ENCODE measurements at regions of chr4 and their contacts with region 1.

Region 1: GRCh38 chr4:8176547-8177399 is 18.2 kb upstream of the ABLIM2 start:
- DNase-seq: peak; percentile 59
- H3K4me3 Mint-ChIP-seq: no peak overlapping the region
- H3K27ac Mint-ChIP-seq: no peak overlapping the region
- H3K4me1 Mint-ChIP-seq: no peaks in the 10 kb centered on the region
- H3K27me3 Mint-ChIP-seq: peaks cover 5% of the 10 kb centered on the region
- CTCF ChIP-seq: peak; percentile 63

Region 2: GRCh38 chr4:8050180-8050554 is 126.6 kb before region 1 on chr4:
- CTCF ChIA-PET with region 1: no interaction called
- intact Hi-C with region 1: no loop called
- DNase-seq: no peak
- H3K4me3 Mint-ChIP-seq: no peak overlapping the region
- H3K27ac Mint-ChIP-seq: no peak overlapping the region
- H3K4me1 Mint-ChIP-seq: no peaks in the 10 kb centered on the region
- H3K27me3 Mint-ChIP-seq: peaks cover 15% of the 10 kb centered on the region
- CTCF ChIP-seq: no peak

Region 3: GRCh38 chr4:8192748-8193738 is 16.3 kb after region 1 on chr4:
- CTCF ChIA-PET with region 1: interaction called, 18 read pairs
- intact Hi-C with region 1: no loop called
- DNase-seq: peak; percentile 56
- H3K4me3 Mint-ChIP-seq: no peak overlapping the region
- H3K27ac Mint-ChIP-seq: peak overlapping the region; percentile 9
- H3K4me1 Mint-ChIP-seq: peaks cover 39% of the 10 kb centered on the region
- H3K27me3 Mint-ChIP-seq: no peaks in the 10 kb centered on the region
- CTCF ChIP-seq: no peak

Region 4: DNA sequence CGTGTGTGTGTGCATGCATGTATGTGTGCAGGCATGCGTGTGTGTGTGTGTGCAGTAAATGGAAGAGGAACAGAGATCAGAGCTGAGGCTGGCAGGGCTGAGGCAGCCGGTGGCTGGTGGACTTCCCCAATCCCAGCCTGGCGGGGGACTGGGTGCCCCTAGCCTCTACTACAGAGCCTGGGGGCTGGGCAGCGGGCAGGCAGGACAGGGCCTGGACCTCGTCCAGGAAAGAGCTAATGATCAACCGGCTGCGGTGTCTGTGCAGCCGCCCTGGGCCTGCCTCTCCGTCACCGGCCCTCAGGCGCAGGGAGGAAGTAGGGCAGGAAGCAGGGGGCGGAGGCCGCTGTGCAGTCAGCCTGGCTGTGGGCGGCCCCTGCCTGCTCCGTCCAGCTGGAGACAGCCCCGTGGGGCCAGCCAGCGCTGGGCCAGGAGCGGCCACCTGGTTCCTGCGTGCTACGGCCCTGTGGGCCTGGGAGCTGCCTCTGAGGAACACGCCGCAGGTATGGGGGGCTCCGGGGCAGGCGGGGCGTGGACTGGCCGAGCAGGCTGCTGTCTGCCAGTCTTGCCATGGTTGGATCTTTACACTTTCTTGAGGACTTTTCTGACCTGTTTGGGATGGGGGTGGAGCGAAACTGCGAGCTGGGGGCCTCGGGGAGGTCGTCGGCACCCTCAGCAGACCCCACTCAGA is 22.3 kb after region 1 on chr4 and contains the start of gene SH3TC1:
- CTCF ChIA-PET with region 1: interaction called, 18 read pairs
- intact Hi-C with region 1: no loop called
- DNase-seq: peak; percentile 92
- H3K4me3 Mint-ChIP-seq: peak within 1 kb of the TSS; percentile 79
- H3K27ac Mint-ChIP-seq: peak within 1 kb of the TSS; percentile 54
- H3K4me1 Mint-ChIP-seq: peaks cover 27% of the 10 kb centered on the region
- H3K27me3 Mint-ChIP-seq: no peaks in the 10 kb centered on the region
- CTCF ChIP-seq: no peak
- total RNA-seq, gene SH3TC1: 7.8 and 10.8 TPM in 2 replicates

Region 5: DNA sequence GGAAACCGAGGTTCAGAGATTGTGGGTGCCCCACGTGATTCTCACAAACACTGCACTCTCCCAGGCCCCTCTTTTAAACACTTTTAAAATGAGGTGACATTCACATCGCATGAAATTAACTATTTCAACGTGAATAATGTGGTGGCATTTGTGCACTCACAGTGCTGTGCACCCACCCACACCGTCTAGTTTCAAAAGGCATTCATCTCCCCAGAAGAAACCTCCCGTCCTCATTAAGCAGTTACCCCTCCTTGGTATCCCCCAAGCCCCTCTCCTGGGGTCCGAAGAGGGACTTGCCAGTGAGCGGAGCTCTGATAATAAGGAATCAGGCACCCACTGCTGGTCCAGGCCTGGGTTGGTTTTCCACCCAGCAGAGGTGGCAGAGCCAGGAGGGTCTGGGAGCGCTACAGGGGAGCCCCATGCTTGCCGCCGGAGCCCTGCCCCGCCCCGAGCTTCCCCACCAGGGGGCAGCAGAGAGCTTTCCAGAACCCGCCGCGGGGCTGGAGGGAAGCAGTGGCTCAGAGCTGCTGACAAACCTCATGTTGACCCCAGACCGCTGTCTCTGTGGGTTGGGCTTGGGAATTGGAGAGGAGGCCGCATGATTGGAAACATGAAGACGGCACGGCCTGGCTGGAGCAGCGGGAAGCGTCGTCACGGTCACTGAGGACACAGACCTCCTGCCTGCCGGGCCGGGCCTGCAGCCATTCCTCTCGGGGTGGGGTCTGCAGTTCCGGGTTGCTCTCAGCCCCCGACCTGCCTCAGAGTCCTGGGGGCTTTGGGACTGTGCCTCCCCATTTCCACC is 65.3 kb after region 1 on chr4:
- CTCF ChIA-PET with region 1: interaction called, 9 read pairs
- intact Hi-C with region 1: loop called (anchors 2 kb)
- DNase-seq: peak; percentile 85
- H3K4me3 Mint-ChIP-seq: no peak overlapping the region
- H3K27ac Mint-ChIP-seq: no peak overlapping the region
- H3K4me1 Mint-ChIP-seq: no peaks in the 10 kb centered on the region
- H3K27me3 Mint-ChIP-seq: no peaks in the 10 kb centered on the region
- CTCF ChIP-seq: peak; percentile 84

Region 6: GRCh38 chr4:8403173-8403753 is 226.5 kb after region 1 on chr4:
- CTCF ChIA-PET with region 1: interaction called, 4 read pairs
- intact Hi-C with region 1: loop called (anchors 5 kb)
- DNase-seq: peak; percentile 83
- H3K4me3 Mint-ChIP-seq: no peak overlapping the region
- H3K27ac Mint-ChIP-seq: no peak overlapping the region
- H3K4me1 Mint-ChIP-seq: no peaks in the 10 kb centered on the region
- H3K27me3 Mint-ChIP-seq: no peaks in the 10 kb centered on the region
- CTCF ChIP-seq: peak; percentile 66

Region 7: GRCh38 chr4:8506373-8507188 is 329.8 kb after region 1 on chr4:
- CTCF ChIA-PET with region 1: no interaction called
- intact Hi-C with region 1: no loop called
- DNase-seq: no peak
- H3K4me3 Mint-ChIP-seq: no peak overlapping the region
- H3K27ac Mint-ChIP-seq: no peak overlapping the region
- H3K4me1 Mint-ChIP-seq: peaks cover 14% of the 10 kb centered on the region
- H3K27me3 Mint-ChIP-seq: peaks cover 20% of the 10 kb centered on the region
- CTCF ChIP-seq: no peak